ENCODE measurements at regions of chr21 and their contacts with region 1.

Region 1: DNA sequence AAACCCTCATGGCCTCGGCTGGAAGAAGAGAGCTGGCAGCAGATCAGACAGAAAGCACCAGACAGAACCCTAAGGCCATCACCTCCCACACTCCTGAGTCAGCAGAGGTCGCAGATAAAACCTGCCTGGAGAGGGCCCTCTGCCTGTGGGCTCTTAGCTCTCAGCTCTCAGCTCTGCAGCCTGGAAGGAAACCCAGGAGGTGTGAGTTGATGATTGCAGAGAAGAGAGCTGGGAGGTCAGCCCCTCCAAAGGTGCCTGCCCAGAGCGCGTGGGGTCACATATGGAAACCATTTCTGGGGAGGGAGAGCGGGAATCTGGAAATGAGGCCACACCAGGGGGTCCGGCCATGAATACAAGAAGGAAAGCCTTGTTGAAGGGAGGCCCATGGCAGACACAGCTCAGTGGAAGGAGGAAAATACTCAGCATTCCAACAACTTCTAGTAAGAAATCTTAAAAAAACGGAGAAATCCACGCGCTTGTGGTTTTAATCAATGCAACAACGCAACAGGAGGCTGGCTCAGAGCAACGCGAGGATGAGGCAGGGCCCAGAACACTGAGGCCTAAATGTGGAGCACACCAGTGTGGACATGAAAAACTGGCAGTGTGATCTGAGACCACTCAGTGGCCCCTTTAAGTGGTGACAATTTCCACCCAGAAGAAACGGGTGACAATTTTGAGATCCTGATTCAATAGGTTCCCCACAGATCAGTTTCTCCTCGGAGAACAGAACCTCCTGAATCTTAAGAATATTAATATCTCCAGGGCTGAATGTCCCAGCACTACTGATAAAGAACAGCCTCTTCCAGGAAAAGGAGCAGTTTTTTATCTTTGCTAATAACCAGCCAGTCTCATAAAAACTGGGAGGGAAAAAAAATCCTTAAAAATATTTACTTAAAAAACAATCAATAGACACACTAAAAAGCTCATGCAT is 45.7 kb downstream of the PSMG1 start:
- DNase-seq: no peak
- ATAC-seq: no peak
- H3K4me3 ChIP-seq: no peak overlapping the region
- H3K27ac ChIP-seq: no peak overlapping the region
- H3K4me1 ChIP-seq: no peaks in the 10 kb centered on the region
- H3K27me3 ChIP-seq: 0 out of 4 replicates have a peak, but pooled peaks cover 0 to 2% of the 10 kb centered on the region in 2 experiments
- CTCF ChIP-seq: no peak
- EP300 ChIP-seq: no peak
- POLR2A ChIP-seq: no peak
- RAD21 ChIP-seq: no peak

Region 2: GRCh38 chr21:38505654-38506515 is 631.6 kb before region 1 on chr21:
- CTCF ChIA-PET with region 1: interaction called, 4 read pairs
- POLR2A ChIA-PET with region 1: no interaction called
- RAD21 ChIA-PET with region 1: interaction called, 4 read pairs
- SMC1A ChIA-PET with region 1: interaction called, 7 read pairs
- in situ Hi-C with region 1: no loop called
- intact Hi-C with region 1: loop called (anchors 5 kb)
- DNase-seq: no peak
- ATAC-seq: peak; percentile 86
- H3K4me3 ChIP-seq: no peak overlapping the region
- H3K27ac ChIP-seq: no peak overlapping the region
- H3K4me1 ChIP-seq: no peaks in the 10 kb centered on the region
- H3K27me3 ChIP-seq: no peaks in the 10 kb centered on the region
- CTCF ChIP-seq: peak; percentile 55 to 65 (median 56)
- EP300 ChIP-seq: no peak
- POLR2A ChIP-seq: no peak
- RAD21 ChIP-seq: peak; percentile 65

Region 3: GRCh38 chr21:38645282-38645681 is 492.2 kb before region 1 on chr21:
- CTCF ChIA-PET with region 1: no interaction called
- POLR2A ChIA-PET with region 1: no interaction called
- RAD21 ChIA-PET with region 1: no interaction called
- SMC1A ChIA-PET with region 1: no interaction called
- in situ Hi-C with region 1: no loop called
- intact Hi-C with region 1: no loop called
- DNase-seq: no peak
- ATAC-seq: no peak
- H3K4me3 ChIP-seq: no peak overlapping the region
- H3K27ac ChIP-seq: no peak overlapping the region
- H3K4me1 ChIP-seq: no peaks in the 10 kb centered on the region
- H3K27me3 ChIP-seq: no peaks in the 10 kb centered on the region
- CTCF ChIP-seq: no peak
- EP300 ChIP-seq: no peak
- POLR2A ChIP-seq: no peak
- RAD21 ChIP-seq: no peak

Region 4: GRCh38 chr21:38721971-38722370 is 415.5 kb before region 1 on chr21:
- CTCF ChIA-PET with region 1: no interaction called
- POLR2A ChIA-PET with region 1: no interaction called
- RAD21 ChIA-PET with region 1: no interaction called
- SMC1A ChIA-PET with region 1: no interaction called
- in situ Hi-C with region 1: loop called (anchors 10 kb)
- intact Hi-C with region 1: no loop called
- DNase-seq: no peak
- ATAC-seq: no peak
- H3K4me3 ChIP-seq: no peak overlapping the region
- H3K27ac ChIP-seq: no peak overlapping the region
- H3K4me1 ChIP-seq: no peaks in the 10 kb centered on the region
- H3K27me3 ChIP-seq: no peaks in the 10 kb centered on the region; a peak in 1 of 4 replicates
- CTCF ChIP-seq: no peak
- EP300 ChIP-seq: no peak
- POLR2A ChIP-seq: no peak
- RAD21 ChIP-seq: no peak

Region 5: DNA sequence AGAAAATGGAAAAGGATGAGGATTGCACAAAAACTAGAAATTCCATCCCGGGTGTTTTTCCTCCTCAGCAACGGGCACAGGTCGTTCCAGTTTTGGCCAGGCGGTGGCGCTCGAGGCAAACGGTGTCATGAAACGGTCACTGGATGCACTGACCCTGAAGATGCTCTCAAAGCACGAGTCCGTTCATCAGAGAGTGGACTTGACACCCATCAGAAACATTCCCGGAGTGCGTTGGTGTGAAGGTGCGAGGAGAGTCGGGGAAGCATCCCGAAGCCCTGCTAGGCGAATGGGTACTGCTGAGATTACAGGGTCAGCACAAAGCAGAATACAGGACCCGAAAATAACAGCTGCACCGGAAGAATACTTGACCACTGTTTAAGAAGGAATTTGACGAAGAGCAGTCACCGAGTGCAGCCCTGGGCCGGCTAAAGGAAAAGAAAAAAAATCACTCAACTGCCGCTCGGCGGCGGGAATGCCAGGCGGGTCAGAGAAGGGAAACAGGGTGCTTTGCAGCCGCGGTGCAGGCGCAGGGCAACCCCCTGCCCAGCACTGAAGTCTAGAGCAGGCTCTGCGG is 403.5 kb before region 1 on chr21:
- CTCF ChIA-PET with region 1: interaction called, 18 read pairs
- POLR2A ChIA-PET with region 1: no interaction called
- RAD21 ChIA-PET with region 1: interaction called, 6 read pairs
- SMC1A ChIA-PET with region 1: interaction called, 4 read pairs
- in situ Hi-C with region 1: loop called (anchors 10 kb)
- intact Hi-C with region 1: loop called (anchors 1 kb)
- DNase-seq: peak; percentile 12
- ATAC-seq: peak; percentile 91
- H3K4me3 ChIP-seq: peak overlapping the region; percentile 49
- H3K27ac ChIP-seq: no peak overlapping the region
- H3K4me1 ChIP-seq: no peaks in the 10 kb centered on the region
- H3K27me3 ChIP-seq: no peaks in the 10 kb centered on the region; a peak in 1 of 4 replicates
- CTCF ChIP-seq: peak; percentile 90 to 94 (median 94); a peak in 5 of 6 replicates
- EP300 ChIP-seq: no peak
- POLR2A ChIP-seq: no peak
- RAD21 ChIP-seq: peak; percentile 93

Region 6: DNA sequence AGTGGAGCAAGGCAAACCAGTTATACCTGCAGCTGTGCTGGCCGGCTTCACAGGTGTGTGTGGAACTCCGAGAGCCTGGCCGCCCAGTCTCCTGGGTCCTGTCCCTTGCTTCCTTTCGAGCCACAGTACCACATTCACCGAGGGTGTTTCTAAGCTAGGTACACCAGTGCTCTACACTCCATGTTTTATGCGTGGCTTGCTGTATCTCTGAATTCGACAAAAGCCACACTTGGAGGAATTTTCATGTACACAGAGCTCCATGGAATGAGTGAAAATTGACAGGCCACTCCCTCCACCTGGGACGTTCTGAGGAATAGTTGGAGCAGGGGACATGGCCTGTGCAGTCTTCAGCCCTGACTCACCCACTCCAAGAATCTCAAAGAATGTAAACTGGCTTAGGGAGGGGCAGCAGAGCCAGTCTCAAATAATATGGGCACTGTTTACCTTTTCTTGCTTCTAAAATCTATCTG is 317.8 kb before region 1 on chr21:
- CTCF ChIA-PET with region 1: no interaction called
- POLR2A ChIA-PET with region 1: no interaction called
- RAD21 ChIA-PET with region 1: no interaction called
- SMC1A ChIA-PET with region 1: no interaction called
- in situ Hi-C with region 1: no loop called
- intact Hi-C with region 1: no loop called
- DNase-seq: no peak
- ATAC-seq: no peak
- H3K4me3 ChIP-seq: no peak overlapping the region
- H3K27ac ChIP-seq: no peak overlapping the region
- H3K4me1 ChIP-seq: no peaks in the 10 kb centered on the region
- H3K27me3 ChIP-seq: no peaks in the 10 kb centered on the region
- CTCF ChIP-seq: no peak
- EP300 ChIP-seq: no peak
- POLR2A ChIP-seq: no peak
- RAD21 ChIP-seq: no peak